ENCODE measurements at regions of chr20 and their contacts with region 1.

Region 1: DNA sequence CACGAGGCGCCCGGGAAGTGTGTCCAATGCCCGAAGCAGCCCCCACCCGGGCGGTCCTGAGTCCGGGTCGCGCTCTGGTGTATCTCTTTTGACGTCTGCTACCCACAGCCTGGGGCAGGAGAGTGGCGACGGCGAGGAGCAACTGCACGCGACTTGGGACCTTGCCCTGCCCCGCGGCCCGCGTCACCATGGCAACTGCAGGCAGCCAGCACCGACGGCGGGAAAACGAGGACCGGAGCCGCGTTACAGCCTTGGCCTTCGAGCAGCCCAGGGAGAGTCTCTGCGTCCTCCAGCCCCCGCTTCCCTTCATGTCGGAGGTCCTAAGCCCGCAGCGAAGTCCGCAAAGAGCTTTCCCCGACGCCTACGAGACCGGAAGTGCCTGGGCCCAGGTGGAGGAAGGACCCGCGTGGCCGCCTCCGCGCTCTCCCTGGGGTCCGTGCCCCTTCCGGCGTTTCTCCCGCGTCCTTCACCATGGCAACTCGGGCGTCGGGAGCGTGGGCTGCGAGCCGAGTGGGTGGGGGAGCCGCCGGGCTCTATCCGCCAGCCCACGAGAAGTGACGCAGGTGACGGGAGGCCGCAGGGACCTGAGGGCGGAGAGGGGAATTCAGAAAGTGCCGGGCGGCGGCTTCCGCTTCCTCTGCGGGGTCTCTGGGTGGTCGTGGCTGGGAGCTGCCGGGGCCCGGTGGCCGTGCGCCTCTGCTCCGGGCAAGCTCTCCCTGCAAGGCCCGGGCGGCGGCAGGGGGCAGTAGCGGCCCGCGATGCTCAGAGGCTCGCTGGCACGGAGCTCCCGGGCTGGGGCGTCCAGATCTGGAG is 88.6 kb upstream of the TGM3 start:
- DNase-seq: peak; percentile 34 to 62 (median 38)
- ATAC-seq: peak; percentile 94
- H3K4me3 ChIP-seq: no peak overlapping the region
- H3K27ac ChIP-seq: no peak overlapping the region
- H3K4me1 ChIP-seq: peaks cover 0 to 12% of the 10 kb centered on the region in 2 experiments; a peak in 2 of 5 replicates
- H3K27me3 ChIP-seq: peaks cover 4 to 26% of the 10 kb centered on the region in 2 experiments; a peak in 4 of 5 replicates
- CTCF ChIP-seq: peak; percentile 54 to 73 (median 65); a peak in 5 of 6 replicates
- EP300 ChIP-seq: no peak
- POLR2A ChIP-seq: no peak
- RAD21 ChIP-seq: peak; percentile 81 to 84

Region 2: DNA sequence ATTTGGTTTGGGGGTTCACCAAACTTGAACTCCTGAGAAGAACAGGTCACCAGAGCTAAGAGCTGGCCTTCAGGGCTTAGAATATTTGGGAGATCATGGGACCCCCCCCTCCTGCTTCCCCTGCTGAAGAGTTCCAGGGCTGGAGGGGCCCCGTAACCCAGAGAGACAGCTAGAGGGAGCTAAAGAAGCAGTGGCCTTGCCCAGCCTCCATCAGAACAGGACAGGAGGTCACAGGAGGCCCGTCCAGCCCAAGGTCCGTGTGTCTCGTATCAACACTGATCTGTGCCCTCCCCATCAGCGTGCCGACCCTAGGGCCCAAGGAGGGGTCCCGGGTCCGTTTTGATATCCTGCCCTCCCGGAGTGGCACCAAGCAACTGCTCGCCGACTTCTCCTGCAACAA is 133.0 kb after region 1 on chr20:
- CTCF ChIA-PET with region 1: no interaction called
- POLR2A ChIA-PET with region 1: no interaction called
- in situ Hi-C with region 1: loop called (anchors 5 kb)
- intact Hi-C with region 1: no loop called
- DNase-seq: no peak
- ATAC-seq: peak; percentile 71
- H3K4me3 ChIP-seq: no peak overlapping the region
- H3K27ac ChIP-seq: no peak overlapping the region
- H3K4me1 ChIP-seq: no peaks in the 10 kb centered on the region; a peak in 1 of 5 replicates
- H3K27me3 ChIP-seq: peaks cover 2 to 21% of the 10 kb centered on the region in 2 experiments; a peak in 3 of 5 replicates
- CTCF ChIP-seq: peak in 2 of 3 experiments; percentile 14 to 27; a peak in 1 of 6 replicates
- EP300 ChIP-seq: no peak
- POLR2A ChIP-seq: no peak
- RAD21 ChIP-seq: no peak

Region 3: GRCh38 chr20:2349818-2350508 is 142.8 kb after region 1 on chr20:
- CTCF ChIA-PET with region 1: interaction called, 12 read pairs
- POLR2A ChIA-PET with region 1: no interaction called
- in situ Hi-C with region 1: no loop called
- intact Hi-C with region 1: loop called (anchors 1 kb)
- DNase-seq: no peak
- ATAC-seq: no peak
- H3K4me3 ChIP-seq: no peak overlapping the region
- H3K27ac ChIP-seq: no peak overlapping the region
- H3K4me1 ChIP-seq: no peaks in the 10 kb centered on the region; a peak in 2 of 5 replicates
- H3K27me3 ChIP-seq: no peaks in the 10 kb centered on the region; a peak in 1 of 5 replicates
- CTCF ChIP-seq: no peak
- EP300 ChIP-seq: no peak
- POLR2A ChIP-seq: no peak
- RAD21 ChIP-seq: no peak

Region 4: GRCh38 chr20:2446845-2447244 is 239.7 kb after region 1 on chr20:
- CTCF ChIA-PET with region 1: no interaction called
- POLR2A ChIA-PET with region 1: no interaction called
- in situ Hi-C with region 1: loop called (anchors 10 kb)
- intact Hi-C with region 1: loop called (anchors 5 kb)
- DNase-seq: no peak
- ATAC-seq: no peak
- H3K4me3 ChIP-seq: no peak overlapping the region
- H3K27ac ChIP-seq: no peak overlapping the region
- H3K4me1 ChIP-seq: no peaks in the 10 kb centered on the region
- H3K27me3 ChIP-seq: peaks cover 0 to 3% of the 10 kb centered on the region in 2 experiments; a peak in 1 of 5 replicates
- CTCF ChIP-seq: no peak
- EP300 ChIP-seq: no peak
- POLR2A ChIP-seq: no peak
- RAD21 ChIP-seq: no peak